T-cell (primary cell): ENCODE measurements at regions of chr12 and their contacts with region 1.

Region 1: DNA sequence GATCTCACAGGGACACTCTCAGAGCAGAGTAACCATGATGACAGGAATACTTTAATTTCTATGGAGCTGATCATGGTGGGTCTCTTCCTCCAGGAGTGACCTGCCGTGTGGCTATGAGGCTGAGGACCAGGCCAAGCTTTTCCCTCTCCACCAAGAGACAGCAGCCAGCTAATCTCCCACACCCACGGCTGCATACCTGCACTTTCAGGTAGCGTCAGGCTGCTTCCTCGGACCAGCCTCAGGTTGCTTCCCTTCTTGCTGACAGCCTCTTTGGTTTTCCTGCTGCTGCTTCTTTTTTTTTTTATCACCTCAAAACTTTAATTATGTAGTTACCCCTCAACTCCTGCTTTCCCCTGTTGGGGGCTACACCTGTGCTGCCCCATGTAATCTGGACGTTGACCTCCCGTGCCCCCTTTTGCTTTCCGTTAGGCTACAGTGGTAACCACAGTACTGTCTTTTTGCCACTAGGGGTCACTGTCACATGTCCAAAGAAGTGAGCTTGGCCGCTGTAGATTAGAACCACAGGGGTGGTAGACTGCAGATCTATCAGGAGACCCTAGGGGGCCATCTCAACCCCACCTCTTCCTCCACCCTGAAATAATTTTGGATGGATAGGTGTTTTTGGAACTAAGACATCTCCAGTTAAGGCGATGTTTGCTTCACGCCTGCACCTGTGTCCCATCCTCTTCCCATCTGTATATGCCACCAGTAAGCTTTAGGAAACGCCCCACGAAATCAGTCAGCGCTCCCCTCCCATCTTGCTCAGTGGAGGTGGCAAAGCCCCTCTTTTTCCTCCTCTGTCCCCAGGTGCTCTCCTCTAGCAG is 7.8 kb upstream of the PIP4K2C start:
- DNase-seq: peak; percentile 23 to 89 (median 54)
- ATAC-seq: peak; percentile 98 to 100 (median 99)
- H3K4me3 ChIP-seq: no peak overlapping the region
- H3K4me3 Mint-ChIP-seq: no peak overlapping the region
- H3K27ac ChIP-seq: no peak overlapping the region
- H3K27ac Mint-ChIP-seq: no peak overlapping the region
- H3K4me1 ChIP-seq: peaks cover 0 to 8% of the 10 kb centered on the region in 2 experiments
- H3K4me1 Mint-ChIP-seq: peaks cover 0 to 6% (median 6%) of the 10 kb centered on the region in 3 donors
- H3K27me3 ChIP-seq: peaks cover 0 to 26% of the 10 kb centered on the region in 2 experiments
- H3K27me3 Mint-ChIP-seq: peaks cover 0 to 10% of the 10 kb centered on the region in 2 donors

Region 2: GRCh38 chr12:57607958-57608663 is 24.9 kb after region 1 on chr12:
- CTCF ChIA-PET with region 1: interaction called, 6 to 11 read pairs
- POLR2A ChIA-PET with region 1: no interaction called
- DNase-seq: no peak
- ATAC-seq: no peak
- H3K4me3 ChIP-seq: no peak overlapping the region
- H3K4me3 Mint-ChIP-seq: no peak overlapping the region
- H3K27ac ChIP-seq: no peak overlapping the region
- H3K27ac Mint-ChIP-seq: peak overlapping the region in 1 of 2 donors; percentile 41
- H3K4me1 ChIP-seq: peaks cover 18 to 43% of the 10 kb centered on the region in 2 experiments
- H3K4me1 Mint-ChIP-seq: peaks cover 30 to 41% (median 41%) of the 10 kb centered on the region in 3 donors
- H3K27me3 ChIP-seq: peaks cover 2 to 31% of the 10 kb centered on the region in 2 experiments
- H3K27me3 Mint-ChIP-seq: peaks cover 9 to 18% of the 10 kb centered on the region in 2 donors

Region 3: GRCh38 chr12:57621497-57622292 is 38.5 kb after region 1 on chr12:
- CTCF ChIA-PET with region 1: interaction called, 17 to 21 read pairs
- POLR2A ChIA-PET with region 1: no interaction called
- DNase-seq: peak in 25 of 35 experiments; percentile 11 to 74 (median 40)
- ATAC-seq: peak; percentile 72 to 78 (median 74)
- H3K4me3 ChIP-seq: peak overlapping the region; percentile 39 to 68
- H3K4me3 Mint-ChIP-seq: peak overlapping the region; percentile 71 to 86 (median 72)
- H3K27ac ChIP-seq: no peak overlapping the region
- H3K27ac Mint-ChIP-seq: peak overlapping the region in 1 of 2 donors; percentile 81
- H3K4me1 ChIP-seq: peaks cover 7 to 32% of the 10 kb centered on the region in 2 experiments
- H3K4me1 Mint-ChIP-seq: peaks cover 26 to 33% (median 33%) of the 10 kb centered on the region in 3 donors
- H3K27me3 ChIP-seq: peaks cover 16 to 97% of the 10 kb centered on the region in 2 experiments
- H3K27me3 Mint-ChIP-seq: peaks cover 88 to 95% of the 10 kb centered on the region in 2 donors

Region 4: GRCh38 chr12:57632694-57633477 is 49.7 kb after region 1 on chr12 and contains the start of gene B4GALNT1:
- CTCF ChIA-PET with region 1: interaction called, 6 to 11 read pairs
- POLR2A ChIA-PET with region 1: no interaction called
- DNase-seq: peak in 32 of 35 experiments; percentile 33 to 80 (median 50)
- ATAC-seq: peak; percentile 89 to 92 (median 90)
- H3K4me3 ChIP-seq: peak within 1 kb of the TSS; percentile 51 to 53
- H3K4me3 Mint-ChIP-seq: peak within 1 kb of the TSS; percentile 47 to 73 (median 59)
- H3K27ac ChIP-seq: no peak within 1 kb of the TSS
- H3K27ac Mint-ChIP-seq: no peak within 1 kb of the TSS
- H3K4me1 ChIP-seq: peaks cover 0 to 22% of the 10 kb centered on the region in 2 experiments
- H3K4me1 Mint-ChIP-seq: peaks cover 0 to 16% (median 11%) of the 10 kb centered on the region in 3 donors
- H3K27me3 ChIP-seq: peaks cover 10 to 71% of the 10 kb centered on the region in 2 experiments
- H3K27me3 Mint-ChIP-seq: peaks cover 30 to 57% of the 10 kb centered on the region in 2 donors
- total RNA-seq, gene B4GALNT1: 0.16 to 0.54 (median 0.26) TPM in 3 of 5 donors, not detected in the others

Region 5: DNA sequence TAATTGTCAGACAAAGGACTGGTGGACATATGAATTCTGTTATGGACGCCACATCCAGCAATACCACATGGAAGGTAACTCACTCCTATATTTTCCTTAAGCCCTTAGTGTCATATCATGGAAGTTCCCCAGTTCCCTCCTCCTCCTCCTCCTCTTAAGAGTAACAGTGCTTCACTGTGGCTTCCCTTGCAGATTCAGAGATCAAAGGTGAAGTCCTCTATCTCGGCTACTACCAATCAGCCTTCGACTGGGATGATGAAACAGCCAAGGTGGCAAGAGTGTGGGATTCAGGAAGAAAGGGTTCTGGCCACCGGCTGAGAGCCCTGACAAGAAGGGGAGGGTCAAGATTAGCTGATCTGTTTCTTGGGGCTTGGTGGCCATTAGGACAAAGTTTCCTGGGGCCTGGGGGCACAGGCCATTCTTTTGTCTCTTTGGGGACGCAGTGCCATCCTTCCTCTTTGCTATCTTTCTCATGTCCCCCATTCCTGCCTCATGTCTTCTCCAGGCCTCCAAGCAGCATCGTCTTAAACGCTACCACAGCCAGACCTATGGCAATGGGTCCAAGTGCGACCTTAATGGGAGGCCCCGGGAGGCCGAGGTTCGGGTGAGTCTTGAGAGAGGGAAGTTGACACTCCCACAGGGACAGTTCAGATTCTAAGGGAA is 112.7 kb after region 1 on chr12:
- CTCF ChIA-PET with region 1: no interaction called
- POLR2A ChIA-PET with region 1: no interaction called
- DNase-seq: no peak
- ATAC-seq: no peak
- H3K4me3 ChIP-seq: no peak overlapping the region
- H3K4me3 Mint-ChIP-seq: peak overlapping the region in 2 of 3 donors; percentile 32 to 36
- H3K27ac ChIP-seq: no peak overlapping the region
- H3K27ac Mint-ChIP-seq: no peak overlapping the region
- H3K4me1 ChIP-seq: peaks cover 4 to 14% of the 10 kb centered on the region in 2 experiments
- H3K4me1 Mint-ChIP-seq: peaks cover 11 to 31% (median 28%) of the 10 kb centered on the region in 3 donors
- H3K27me3 ChIP-seq: no peaks in the 10 kb centered on the region
- H3K27me3 Mint-ChIP-seq: no peaks in the 10 kb centered on the region